B cell (primary cell): ENCODE measurements at regions of chr6 and their contacts with region 1.

Region 1: DNA sequence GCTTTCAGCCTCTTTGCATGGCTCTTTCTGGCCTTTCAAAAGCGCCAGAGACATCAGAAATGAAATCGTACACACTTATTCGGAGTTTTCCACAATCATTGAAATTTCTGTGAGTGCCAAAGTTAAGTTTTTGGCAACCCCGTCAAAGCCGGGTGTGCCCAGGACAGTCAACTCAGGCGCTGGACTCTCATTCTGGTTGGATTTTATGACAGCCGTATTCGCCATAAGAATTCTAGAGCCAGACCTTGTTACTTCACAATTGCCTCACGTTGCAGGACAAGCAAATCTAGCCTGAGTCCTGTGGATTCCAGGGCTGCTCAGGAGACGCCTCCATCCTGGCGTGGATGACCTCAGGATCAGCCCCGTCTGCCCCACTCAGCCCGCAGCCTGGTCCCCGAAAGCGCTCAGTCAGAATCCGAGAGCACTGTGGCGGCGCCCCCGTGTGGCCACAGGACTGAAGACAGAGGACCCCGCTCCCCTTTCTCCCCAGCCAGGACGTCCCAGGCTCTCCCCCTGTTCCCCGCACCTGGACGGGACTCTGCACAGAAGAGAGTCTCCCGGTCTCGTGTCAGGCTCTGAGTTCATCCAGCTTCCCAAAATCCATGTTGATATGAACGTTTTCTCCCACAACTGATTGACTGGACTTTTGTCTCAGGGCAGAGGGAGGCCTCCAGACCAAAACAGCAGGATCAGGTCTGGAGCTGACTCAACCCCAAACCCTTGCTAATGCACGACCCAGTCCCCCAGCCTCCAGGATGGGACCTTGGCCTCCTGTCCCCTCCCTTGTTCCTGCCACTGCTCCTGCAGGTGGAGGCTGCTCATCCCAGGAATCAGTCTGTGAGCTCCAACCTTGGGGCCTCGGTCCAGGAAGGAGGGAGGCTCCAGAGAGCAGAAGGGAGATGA is 38.2 kb downstream of the MICA start:
- DNase-seq: peak; percentile 81
- ATAC-seq: peak; percentile 95
- H3K4me3 ChIP-seq: no peak overlapping the region
- H3K4me3 Mint-ChIP-seq: no peak overlapping the region
- H3K27ac ChIP-seq: no peak overlapping the region
- H3K27ac Mint-ChIP-seq: peak overlapping the region; percentile 20
- H3K4me1 ChIP-seq: peaks cover 3 to 4% of the 10 kb centered on the region in 2 donors
- H3K4me1 Mint-ChIP-seq: peaks cover 17% of the 10 kb centered on the region
- H3K27me3 ChIP-seq: peaks cover 0 to 18% (median 16%) of the 10 kb centered on the region in 4 experiments
- H3K27me3 Mint-ChIP-seq: peaks cover 47% of the 10 kb centered on the region
- CTCF ChIP-seq: peak; percentile 87

Region 2: DNA sequence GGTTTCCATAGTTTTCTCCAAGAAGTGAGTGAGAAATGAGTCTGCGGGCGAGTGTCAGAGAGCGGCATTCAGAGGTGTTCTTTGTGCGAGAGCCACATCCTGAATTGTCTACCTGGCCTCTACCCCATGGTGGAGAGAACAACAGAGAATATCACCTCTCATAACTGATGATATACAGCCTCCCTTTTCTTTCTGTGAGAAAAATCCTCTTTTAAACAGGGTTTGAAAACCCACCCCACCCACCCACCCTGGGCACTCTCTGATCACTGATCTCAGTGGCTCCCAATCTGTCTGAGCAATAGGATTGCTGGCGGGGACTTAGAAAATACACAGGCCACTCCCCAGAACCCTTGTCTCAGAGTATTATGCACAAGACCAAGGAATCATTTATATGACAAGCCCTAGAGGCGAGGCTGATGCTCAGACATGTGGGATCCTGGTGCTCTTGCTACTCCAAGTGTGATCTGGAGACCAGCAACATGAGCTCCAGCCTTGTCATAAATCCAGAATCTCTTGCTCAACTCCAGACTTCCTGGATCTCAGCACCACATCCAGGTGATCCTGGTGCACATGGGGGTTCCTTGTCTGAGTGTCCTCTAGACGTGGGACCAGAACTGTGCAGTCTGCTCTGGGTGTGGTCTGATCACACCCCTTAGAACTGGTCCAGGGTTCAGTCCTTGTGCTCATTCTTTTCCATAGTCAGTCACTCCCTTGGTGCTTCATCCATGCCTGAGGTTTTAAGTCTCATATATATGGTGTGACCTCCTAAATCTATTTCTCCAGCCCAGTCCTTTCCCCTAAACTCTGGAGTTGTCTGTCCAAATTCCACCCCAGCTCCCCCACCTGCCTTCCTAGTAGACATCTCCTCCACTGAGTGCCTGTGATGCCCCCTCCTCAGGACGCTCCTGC is 90.0 kb before region 1 on chr6:
- CTCF ChIA-PET with region 1: no interaction called
- POLR2A ChIA-PET with region 1: no interaction called
- intact Hi-C with region 1: no loop called
- DNase-seq: peak; percentile 65
- ATAC-seq: peak; percentile 11
- H3K4me3 ChIP-seq: no peak overlapping the region
- H3K4me3 Mint-ChIP-seq: peak overlapping the region; percentile 99
- H3K27ac ChIP-seq: peak overlapping the region in 1 of 2 donors; percentile 19
- H3K27ac Mint-ChIP-seq: peak overlapping the region; percentile 81
- H3K4me1 ChIP-seq: peaks cover 51 to 57% of the 10 kb centered on the region in 2 donors
- H3K4me1 Mint-ChIP-seq: peaks cover 67% of the 10 kb centered on the region
- H3K27me3 ChIP-seq: no peaks in the 10 kb centered on the region
- H3K27me3 Mint-ChIP-seq: no peaks in the 10 kb centered on the region
- CTCF ChIP-seq: no peak

Region 3: GRCh38 chr6:31426395-31427354 is 14.9 kb before region 1 on chr6:
- CTCF ChIA-PET with region 1: interaction called, 13 read pairs
- POLR2A ChIA-PET with region 1: interaction called, 3 read pairs
- intact Hi-C with region 1: no loop called
- DNase-seq: peak; percentile 30
- ATAC-seq: peak; percentile 31
- H3K4me3 ChIP-seq: no peak overlapping the region
- H3K4me3 Mint-ChIP-seq: no peak overlapping the region
- H3K27ac ChIP-seq: no peak overlapping the region
- H3K27ac Mint-ChIP-seq: peak overlapping the region; percentile 13
- H3K4me1 ChIP-seq: peaks cover 18% of the 10 kb centered on the region in 2 donors
- H3K4me1 Mint-ChIP-seq: peaks cover 26% of the 10 kb centered on the region
- H3K27me3 ChIP-seq: no peaks in the 10 kb centered on the region
- H3K27me3 Mint-ChIP-seq: no peaks in the 10 kb centered on the region
- CTCF ChIP-seq: no peak